ENCODE measurements at regions of chr2 and their contacts with region 1.

Region 1: DNA sequence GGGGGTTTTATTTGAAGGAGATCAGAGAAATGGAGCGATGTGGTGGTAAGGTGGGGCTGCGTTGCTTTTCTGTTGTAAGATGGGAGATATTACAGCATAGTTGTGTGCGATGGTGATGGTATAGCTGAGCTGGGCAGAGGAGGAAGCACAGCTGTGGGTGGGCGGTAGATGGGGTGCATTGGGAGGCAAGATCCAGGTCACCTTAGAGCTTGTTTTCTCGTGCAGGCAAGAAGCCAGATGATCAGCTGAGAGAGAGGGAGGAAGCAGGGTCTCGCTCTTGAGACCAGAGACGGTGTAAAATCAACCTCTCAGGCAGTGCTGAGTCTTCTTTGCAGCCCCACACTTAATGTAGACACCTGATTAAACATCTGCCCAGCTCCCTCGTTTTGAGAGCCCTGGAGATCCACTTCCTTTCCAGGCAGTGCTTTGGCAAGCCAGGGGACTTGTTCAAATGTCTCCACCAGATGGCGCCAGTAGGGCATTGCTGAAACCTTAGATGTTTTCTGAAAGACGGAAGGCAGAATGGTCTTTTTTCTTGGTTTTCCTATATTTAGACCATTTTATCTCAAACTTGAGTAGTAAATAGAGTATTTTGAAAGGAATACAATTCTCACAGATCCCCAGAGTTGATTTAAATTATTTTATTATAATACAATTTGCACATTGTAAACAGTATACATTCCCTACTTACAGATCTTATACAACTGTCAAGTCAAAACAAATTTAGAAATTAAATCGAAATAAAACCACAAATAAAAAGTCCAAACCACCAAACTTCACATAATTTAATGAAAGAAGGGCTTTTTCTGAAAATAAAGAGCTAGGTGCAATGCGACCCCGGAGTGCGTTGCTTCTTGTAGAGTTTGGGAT is 21.1 kb upstream of the LYPD6B start:
- DNase-seq: no peak
- H3K4me3 ChIP-seq: no peak overlapping the region
- H3K27me3 ChIP-seq: peaks cover 2% of the 10 kb centered on the region; the same call in 1 of the 2 replicates
- CTCF ChIP-seq: peak; percentile 83

Region 2: GRCh38 chr2:149027590-149028218 is 10.4 kb after region 1 on chr2:
- CTCF ChIA-PET with region 1: interaction called, 19 read pairs
- POLR2A ChIA-PET with region 1: no interaction called
- DNase-seq: no peak
- H3K4me3 ChIP-seq: no peak overlapping the region
- H3K27me3 ChIP-seq: peaks cover 2% of the 10 kb centered on the region; the same call in 1 of the 2 replicates
- CTCF ChIP-seq: no peak

Region 3: DNA sequence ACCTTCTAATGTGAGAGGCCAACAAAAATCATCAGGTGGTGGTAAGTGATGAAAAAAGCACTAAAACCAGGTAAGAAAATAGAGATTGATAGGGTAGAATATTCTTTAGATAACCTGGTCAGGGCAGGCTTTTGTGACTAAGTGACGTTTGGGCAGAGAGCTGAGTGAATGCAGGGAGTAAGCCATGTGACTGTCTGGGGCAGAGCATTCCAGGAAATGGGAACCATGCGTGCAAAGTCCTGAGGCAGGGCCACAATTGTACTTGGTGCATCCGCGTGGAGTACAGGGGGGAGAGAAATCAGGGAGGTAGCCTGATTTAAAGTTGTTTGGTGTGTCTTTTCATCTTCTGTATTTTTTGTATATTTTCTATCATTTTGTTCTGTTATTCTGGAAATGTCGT is 123.7 kb after region 1 on chr2:
- CTCF ChIA-PET with region 1: no interaction called
- POLR2A ChIA-PET with region 1: no interaction called
- DNase-seq: no peak
- H3K4me3 ChIP-seq: no peak overlapping the region
- H3K27me3 ChIP-seq: no peaks in the 10 kb centered on the region
- CTCF ChIP-seq: no peak

Region 4: GRCh38 chr2:149313512-149313972 is 296.2 kb after region 1 on chr2:
- CTCF ChIA-PET with region 1: interaction called, 14 read pairs
- POLR2A ChIA-PET with region 1: no interaction called
- DNase-seq: no peak
- H3K4me3 ChIP-seq: no peak overlapping the region
- H3K27me3 ChIP-seq: no peaks in the 10 kb centered on the region
- CTCF ChIP-seq: peak; percentile 78

Region 5: GRCh38 chr2:149490296-149490695 is 472.9 kb after region 1 on chr2:
- CTCF ChIA-PET with region 1: interaction called, 13 read pairs
- POLR2A ChIA-PET with region 1: no interaction called
- DNase-seq: no peak
- H3K4me3 ChIP-seq: no peak overlapping the region
- H3K27me3 ChIP-seq: peaks cover 1% of the 10 kb centered on the region; the same call in 1 of the 2 replicates
- CTCF ChIP-seq: peak; percentile 46

Region 6: DNA sequence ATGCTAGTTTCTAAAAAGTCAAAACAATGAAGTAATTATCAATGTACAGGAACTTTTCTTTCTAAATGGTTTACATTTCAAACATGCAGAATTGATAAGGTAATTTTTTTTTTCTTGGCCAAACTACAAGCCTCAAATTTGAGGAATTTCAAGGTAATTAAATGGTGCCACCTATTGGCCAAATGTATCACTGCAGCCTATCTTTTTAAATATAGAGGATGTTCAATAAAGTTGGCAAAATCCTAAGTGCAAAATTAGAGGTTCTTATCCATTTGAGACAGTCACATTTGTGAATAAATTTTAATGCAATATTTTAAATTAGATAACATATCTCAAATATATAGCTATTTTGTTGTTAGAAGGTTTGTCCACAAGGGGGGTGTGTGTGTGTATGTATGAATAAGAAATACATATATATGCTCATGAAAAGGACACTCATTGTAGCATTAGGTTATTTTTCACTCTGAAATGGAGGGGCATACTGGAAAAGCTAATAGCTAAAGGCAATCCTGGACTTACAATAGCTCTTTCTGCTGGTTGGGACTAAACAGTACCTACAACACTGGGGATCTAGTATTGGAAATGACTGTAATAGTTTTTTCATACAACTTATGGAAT is 544.1 kb after region 1 on chr2:
- CTCF ChIA-PET with region 1: interaction called, 65 read pairs
- POLR2A ChIA-PET with region 1: no interaction called
- DNase-seq: no peak
- H3K4me3 ChIP-seq: no peak overlapping the region
- H3K27me3 ChIP-seq: no peaks in the 10 kb centered on the region
- CTCF ChIP-seq: peak; percentile 70

Region 7: GRCh38 chr2:149573760-149574159 is 556.4 kb after region 1 on chr2:
- CTCF ChIA-PET with region 1: interaction called, 18 read pairs
- POLR2A ChIA-PET with region 1: no interaction called
- DNase-seq: no peak
- H3K4me3 ChIP-seq: no peak overlapping the region
- H3K27me3 ChIP-seq: no peaks in the 10 kb centered on the region
- CTCF ChIP-seq: peak; percentile 34